ENCODE measurements at regions of chr18 and their contacts with region 1.

Region 1: GRCh38 chr18:2337552-2338141 is 233.7 kb downstream of the METTL4 start:
- DNase-seq: no peak
- H3K4me3 ChIP-seq: no peak overlapping the region
- H3K27me3 ChIP-seq: no peaks in the 10 kb centered on the region
- CTCF ChIP-seq: peak; percentile 61

Region 2: GRCh38 chr18:2540575-2540974 is 202.9 kb after region 1 on chr18:
- CTCF ChIA-PET with region 1: interaction called, 13 read pairs
- POLR2A ChIA-PET with region 1: no interaction called
- DNase-seq: no peak
- H3K4me3 ChIP-seq: no peak overlapping the region
- H3K27me3 ChIP-seq: no peaks in the 10 kb centered on the region
- CTCF ChIP-seq: no peak